ENCODE measurements at regions of chrX and their contacts with region 1.

Region 1: GRCh38 chrX:134374294-134374693 is 85.7 kb upstream of the HPRT1 start:
- DNase-seq: no peak
- H3K4me3 Mint-ChIP-seq: peak overlapping the region; percentile 92
- H3K27ac Mint-ChIP-seq: peak overlapping the region; percentile 94
- H3K4me1 Mint-ChIP-seq: peaks cover 17% of the 10 kb centered on the region
- H3K27me3 Mint-ChIP-seq: no peaks in the 10 kb centered on the region

Region 2: DNA sequence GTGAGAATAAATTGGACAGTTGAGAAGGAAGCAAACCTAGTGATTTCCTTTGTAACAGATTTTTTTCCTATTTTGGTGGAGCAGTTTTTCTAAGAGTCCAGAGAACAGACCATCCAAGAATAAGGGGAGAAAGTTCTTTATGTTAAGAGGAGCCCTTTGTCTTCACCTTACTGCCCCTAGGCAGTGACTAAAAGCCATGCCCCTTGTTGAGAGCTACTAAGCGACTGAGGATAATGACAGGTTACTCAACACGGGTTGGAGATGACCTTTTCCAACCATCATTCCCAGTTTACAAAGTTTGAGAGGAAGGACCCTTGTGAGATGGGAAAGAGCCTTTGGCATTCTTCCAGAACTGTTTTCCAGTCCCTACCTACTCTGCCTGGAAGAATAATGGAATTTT is 134.1 kb before region 1 on chrX:
- CTCF ChIA-PET with region 1: no interaction called
- POLR2A ChIA-PET with region 1: no interaction called
- intact Hi-C with region 1: no loop called
- DNase-seq: no peak
- H3K4me3 Mint-ChIP-seq: no peak overlapping the region
- H3K27ac Mint-ChIP-seq: no peak overlapping the region
- H3K4me1 Mint-ChIP-seq: no peaks in the 10 kb centered on the region
- H3K27me3 Mint-ChIP-seq: peaks cover 7% of the 10 kb centered on the region

Region 3: GRCh38 chrX:134362560-134363089 is 11.7 kb before region 1 on chrX:
- CTCF ChIA-PET with region 1: no interaction called
- POLR2A ChIA-PET with region 1: no interaction called
- intact Hi-C with region 1: no loop called
- DNase-seq: no peak
- H3K4me3 Mint-ChIP-seq: no peak overlapping the region
- H3K27ac Mint-ChIP-seq: no peak overlapping the region
- H3K4me1 Mint-ChIP-seq: no peaks in the 10 kb centered on the region
- H3K27me3 Mint-ChIP-seq: no peaks in the 10 kb centered on the region

Region 4: GRCh38 chrX:134460005-134460861 is 85.9 kb after region 1 on chrX and contains the start of gene HPRT1:
- CTCF ChIA-PET with region 1: no interaction called
- POLR2A ChIA-PET with region 1: no interaction called
- intact Hi-C with region 1: loop called (anchors 2 kb)
- DNase-seq: peak; percentile 83
- H3K4me3 Mint-ChIP-seq: peak within 1 kb of the TSS; percentile 82
- H3K27ac Mint-ChIP-seq: peak within 1 kb of the TSS; percentile 76
- H3K4me1 Mint-ChIP-seq: no peaks in the 10 kb centered on the region
- H3K27me3 Mint-ChIP-seq: no peaks in the 10 kb centered on the region
- total RNA-seq, gene HPRT1: 104 to 109 TPM